Activated CD4-positive, alpha-beta T cell treated with anti-CD3 and anti-CD28 coated beads for 36 hours (primary cell): ENCODE measurements at regions of chr3 and their contacts with region 1.

Region 1: DNA sequence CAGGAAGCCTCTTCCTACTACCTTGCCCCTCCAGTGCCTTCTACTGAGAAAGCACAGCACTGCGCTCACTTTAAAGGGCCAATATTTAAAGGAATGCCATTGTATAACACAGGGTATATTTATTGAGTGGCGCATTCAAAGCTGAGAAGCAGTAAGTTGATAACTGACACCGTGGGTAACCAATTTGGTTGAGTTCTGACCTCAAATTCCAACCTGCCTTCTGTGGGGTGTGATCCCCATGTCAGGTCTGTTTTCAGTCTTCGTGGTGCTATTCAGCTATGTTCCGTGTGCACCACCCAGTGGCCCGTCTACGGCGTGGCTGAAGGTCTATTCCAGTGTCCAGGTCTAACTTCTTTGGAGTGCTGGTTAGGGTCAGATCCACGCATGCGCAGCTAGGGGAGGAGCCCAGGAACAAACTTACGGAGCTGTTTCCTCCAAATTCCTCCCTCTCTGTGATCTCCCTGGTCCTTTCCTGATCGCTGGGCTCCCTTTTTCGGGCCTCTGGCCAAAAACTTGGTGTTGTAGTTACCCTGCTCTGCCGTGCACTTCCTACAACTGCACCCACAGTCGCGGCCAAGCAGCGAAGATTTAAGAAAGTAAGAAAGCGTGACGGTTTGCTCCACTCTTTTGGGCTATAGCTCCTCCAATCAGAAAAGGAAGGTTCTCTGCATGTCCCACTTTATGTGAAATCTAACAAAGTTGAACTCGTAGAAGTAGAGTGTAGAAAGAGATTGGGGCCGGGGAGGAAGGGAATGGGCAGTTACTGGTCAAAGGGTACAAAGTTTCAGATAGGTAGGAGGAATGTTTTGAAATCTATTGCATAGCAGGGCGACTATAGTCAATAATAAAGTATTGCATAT is 7.7 kb downstream of the LRRC2 start:
- DNase-seq: peak; percentile 81
- ATAC-seq: peak; percentile 94
- H3K4me3 Mint-ChIP-seq: peak overlapping the region; percentile 66
- H3K27ac Mint-ChIP-seq: no peak overlapping the region
- H3K4me1 Mint-ChIP-seq: peaks cover 9% of the 10 kb centered on the region
- H3K27me3 Mint-ChIP-seq: peaks cover 2% of the 10 kb centered on the region

Region 2: GRCh38 chr3:45995236-45996192 is 562.9 kb before region 1 on chr3 and contains the start of gene FYCO1:
- CTCF ChIA-PET with region 1: no interaction called
- POLR2A ChIA-PET with region 1: no interaction called
- intact Hi-C with region 1: no loop called
- DNase-seq: peak; percentile 94
- ATAC-seq: peak; percentile 89
- H3K4me3 Mint-ChIP-seq: peak within 1 kb of the TSS; percentile 80
- H3K27ac Mint-ChIP-seq: peak within 1 kb of the TSS; percentile 93
- H3K4me1 Mint-ChIP-seq: peaks cover 43% of the 10 kb centered on the region
- H3K27me3 Mint-ChIP-seq: no peaks in the 10 kb centered on the region
- total RNA-seq, gene FYCO1: 8.2 to 10.6 TPM

Region 3: GRCh38 chr3:46629551-46630517 is 71.4 kb after region 1 on chr3:
- CTCF ChIA-PET with region 1: interaction called, 11 read pairs
- POLR2A ChIA-PET with region 1: no interaction called
- intact Hi-C with region 1: no loop called
- DNase-seq: peak; percentile 89
- ATAC-seq: peak; percentile 99
- H3K4me3 Mint-ChIP-seq: peak overlapping the region; percentile 53
- H3K27ac Mint-ChIP-seq: peak overlapping the region; percentile 66
- H3K4me1 Mint-ChIP-seq: peaks cover 17% of the 10 kb centered on the region
- H3K27me3 Mint-ChIP-seq: no peaks in the 10 kb centered on the region

Region 4: GRCh38 chr3:46674031-46674845 is 115.8 kb after region 1 on chr3:
- CTCF ChIA-PET with region 1: no interaction called
- POLR2A ChIA-PET with region 1: no interaction called
- intact Hi-C with region 1: no loop called
- DNase-seq: peak; percentile 4
- ATAC-seq: no peak
- H3K4me3 Mint-ChIP-seq: no peak overlapping the region
- H3K27ac Mint-ChIP-seq: no peak overlapping the region
- H3K4me1 Mint-ChIP-seq: no peaks in the 10 kb centered on the region
- H3K27me3 Mint-ChIP-seq: no peaks in the 10 kb centered on the region